Activated CD4-positive, alpha-beta T cell treated with anti-CD3 and anti-CD28 coated beads, Interleukin-2, amount 10 ng/mL, durations not matched to agents 24 days and 14 days (primary cell): ENCODE measurements at regions of chr7 and their contacts with region 1.

Region 1: GRCh38 chr7:37786741-37787569 is 61.4 kb upstream of the NME8 start:
- DNase-seq: no peak
- H3K4me3 Mint-ChIP-seq: no peak overlapping the region
- H3K27ac Mint-ChIP-seq: no peak overlapping the region
- H3K4me1 Mint-ChIP-seq: peaks cover 2% of the 10 kb centered on the region
- H3K27me3 Mint-ChIP-seq: peaks cover 3% of the 10 kb centered on the region

Region 2: GRCh38 chr7:37820708-37821468 is 33.9 kb after region 1 on chr7:
- intact Hi-C with region 1: loop called (anchors 5 kb)
- DNase-seq: no peak
- H3K4me3 Mint-ChIP-seq: no peak overlapping the region
- H3K27ac Mint-ChIP-seq: no peak overlapping the region
- H3K4me1 Mint-ChIP-seq: peaks cover 7% of the 10 kb centered on the region
- H3K27me3 Mint-ChIP-seq: peaks cover 18% of the 10 kb centered on the region